ENCODE measurements at regions of chr12 and their contacts with region 1.

Region 1: GRCh38 chr12:54191550-54192022 is 2.8 kb upstream of the SMUG1 start:
- DNase-seq: peak; percentile 87 to 92
- ATAC-seq: peak; percentile 71 to 84
- H3K4me3 ChIP-seq: no peak overlapping the region
- H3K27ac ChIP-seq: peak overlapping the region; percentile 10 to 70; a peak in 3 of 6 replicates
- H3K4me1 ChIP-seq: peaks cover 25% of the 10 kb centered on the region
- CTCF ChIP-seq: peak; percentile 79
- EP300 ChIP-seq: no peak
- POLR2A ChIP-seq: no peak
- RAD21 ChIP-seq: peak; percentile 90 to 92

Region 2: DNA sequence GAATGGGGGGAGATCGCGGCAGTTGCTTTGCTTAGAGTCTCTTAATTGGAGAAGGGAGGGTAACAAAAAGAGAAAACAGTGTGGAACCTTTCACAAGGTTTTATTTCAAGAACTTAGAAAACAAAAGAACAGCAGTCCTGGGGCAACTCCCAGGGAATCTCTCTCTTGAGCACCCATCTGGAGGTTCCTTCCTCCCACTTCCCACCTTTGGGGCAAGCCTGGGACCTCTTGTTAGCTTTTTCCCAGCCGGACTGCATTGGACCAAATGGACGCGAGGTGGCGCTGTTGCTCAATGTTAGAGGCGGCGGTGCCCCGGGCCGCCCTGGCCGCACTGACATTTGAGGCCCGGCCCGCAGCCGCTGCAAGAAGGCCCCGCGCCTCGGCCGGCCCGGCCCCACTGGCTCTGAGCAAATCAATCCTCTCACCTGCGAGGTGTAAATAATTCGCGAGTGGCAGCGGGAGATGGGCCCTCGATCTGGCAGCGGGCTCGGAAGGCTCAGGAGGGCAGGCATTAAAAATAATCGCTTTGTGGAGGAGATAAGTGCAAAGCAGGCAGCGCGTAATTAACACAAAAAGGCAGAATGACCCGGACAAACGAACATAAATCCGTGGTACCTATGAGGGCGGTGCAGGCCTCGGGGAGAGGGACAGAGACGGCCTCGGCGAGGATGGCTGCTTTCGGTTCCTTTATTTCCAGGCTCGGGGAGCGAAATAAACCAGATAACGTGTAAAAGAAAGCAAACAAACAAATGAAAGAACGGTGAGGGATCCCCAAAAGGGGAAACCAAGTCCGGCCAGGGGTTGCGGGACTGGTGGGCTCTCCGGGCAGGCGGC is 185.5 kb before region 1 on chr12:
- CTCF ChIA-PET with region 1: interaction called, 1,074 read pairs
- POLR2A ChIA-PET with region 1: interaction called, 6 read pairs
- DNase-seq: peak; percentile 82 to 86
- ATAC-seq: peak; percentile 59 to 82
- H3K4me3 ChIP-seq: no peak overlapping the region
- H3K27ac ChIP-seq: peak overlapping the region in 1 of 2 experiments; percentile 74; a peak in 3 of 6 replicates
- H3K4me1 ChIP-seq: peaks cover 19% of the 10 kb centered on the region
- CTCF ChIP-seq: peak; percentile 93
- EP300 ChIP-seq: no peak
- POLR2A ChIP-seq: no peak
- RAD21 ChIP-seq: peak; percentile 97 to 98

Region 3: DNA sequence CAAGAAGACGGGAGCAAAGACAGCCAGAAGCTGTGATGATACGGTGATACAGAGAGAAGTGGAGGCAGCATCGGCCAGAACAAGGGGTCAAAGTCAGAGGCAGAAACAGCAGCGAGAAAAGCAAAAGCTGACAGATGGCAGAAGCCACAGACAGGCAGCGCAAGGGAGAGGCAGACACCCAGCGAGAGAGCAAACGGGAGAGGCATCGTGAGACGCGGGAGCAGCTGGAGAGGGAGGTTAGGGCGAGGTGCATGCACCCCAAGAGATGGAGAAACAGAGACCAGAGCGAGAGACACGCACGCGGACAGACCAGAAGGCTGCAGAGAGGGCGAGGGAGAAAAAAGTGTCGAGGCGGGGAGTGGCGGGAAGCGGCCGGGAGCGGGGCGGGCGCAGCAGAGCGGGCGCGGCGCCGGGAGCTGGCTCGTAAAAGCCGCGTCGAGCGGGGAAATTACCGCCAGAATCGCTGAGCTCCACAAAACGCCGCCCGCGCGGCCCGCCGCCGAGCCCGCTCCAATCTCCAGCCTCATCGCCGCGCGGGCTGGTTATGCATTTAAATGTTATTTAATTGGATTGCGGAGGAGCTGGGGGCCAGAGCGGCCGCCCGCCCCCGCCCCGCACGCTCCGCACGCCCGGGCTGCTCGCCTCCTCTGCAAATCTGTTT is 18.4 kb before region 1 on chr12:
- CTCF ChIA-PET with region 1: interaction called, 14 read pairs
- POLR2A ChIA-PET with region 1: interaction called, 6 read pairs
- DNase-seq: no peak
- ATAC-seq: no peak
- H3K4me3 ChIP-seq: no peak overlapping the region
- H3K27ac ChIP-seq: no peak overlapping the region
- H3K4me1 ChIP-seq: no peaks in the 10 kb centered on the region
- CTCF ChIP-seq: no peak
- EP300 ChIP-seq: no peak
- POLR2A ChIP-seq: no peak
- RAD21 ChIP-seq: no peak

Region 4: GRCh38 chr12:54207484-54208294 is 16.1 kb after region 1 on chr12:
- CTCF ChIA-PET with region 1: interaction called, 200 read pairs
- POLR2A ChIA-PET with region 1: no interaction called
- DNase-seq: peak; percentile 80 to 81
- ATAC-seq: peak; percentile 81 to 95
- H3K4me3 ChIP-seq: no peak overlapping the region
- H3K27ac ChIP-seq: no peak overlapping the region
- H3K4me1 ChIP-seq: no peaks in the 10 kb centered on the region
- CTCF ChIP-seq: peak; percentile 81
- EP300 ChIP-seq: no peak
- POLR2A ChIP-seq: no peak
- RAD21 ChIP-seq: peak; percentile 83 to 92

Measured in A549 (cell line).